Activated CD8-positive, alpha-beta T cell treated with anti-CD3 and anti-CD28 coated beads for 36 hours (primary cell): ENCODE measurements at regions of chr1 and their contacts with region 1.

Region 1: GRCh38 chr1:89739844-89740216 is 81.0 kb upstream of the LRRC8D start:
- DNase-seq: no peak
- ATAC-seq: no peak
- H3K4me3 Mint-ChIP-seq: peak overlapping the region; percentile 70
- H3K27ac Mint-ChIP-seq: peak overlapping the region; percentile 93
- H3K4me1 Mint-ChIP-seq: peaks cover 48% of the 10 kb centered on the region
- H3K27me3 Mint-ChIP-seq: no peaks in the 10 kb centered on the region
- CTCF ChIP-seq: no peak

Region 2: DNA sequence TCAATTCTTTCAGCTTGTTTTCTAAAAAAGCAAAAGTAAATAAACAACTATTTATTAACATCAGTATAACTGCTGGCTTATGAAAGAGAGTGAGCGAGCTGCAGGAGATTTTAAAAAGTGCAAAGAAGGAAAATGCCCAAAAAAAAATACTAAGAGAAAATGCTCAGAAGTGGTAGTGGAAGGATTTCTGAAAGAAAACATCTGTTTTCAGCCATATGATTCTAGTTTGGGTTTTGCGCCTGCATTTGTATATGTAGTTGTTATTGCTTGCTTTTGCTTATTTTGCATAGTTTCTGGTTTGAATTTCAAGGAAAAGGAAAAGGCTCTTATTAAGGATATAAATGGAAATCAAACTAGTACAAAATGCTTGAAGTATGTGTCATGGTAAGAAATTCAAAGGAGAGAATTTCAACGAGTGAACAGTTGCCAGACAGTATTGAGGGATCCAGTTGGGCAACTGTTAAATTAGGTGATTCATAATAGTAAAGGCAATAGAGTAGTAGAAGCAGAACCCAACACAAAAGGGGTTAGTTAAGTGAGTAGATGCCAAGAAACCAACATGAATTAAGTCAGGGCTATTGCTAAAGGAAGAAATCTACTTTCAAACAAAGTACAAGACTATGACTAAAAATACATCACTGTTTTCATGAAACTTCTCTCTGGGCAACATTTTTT is 468.4 kb before region 1 on chr1:
- CTCF ChIA-PET with region 1: no interaction called
- POLR2A ChIA-PET with region 1: no interaction called
- intact Hi-C with region 1: no loop called
- DNase-seq: no peak
- ATAC-seq: no peak
- H3K4me3 Mint-ChIP-seq: peak overlapping the region; percentile 100
- H3K27ac Mint-ChIP-seq: peak overlapping the region; percentile 100
- H3K4me1 Mint-ChIP-seq: peaks cover 58% of the 10 kb centered on the region
- H3K27me3 Mint-ChIP-seq: no peaks in the 10 kb centered on the region
- CTCF ChIP-seq: no peak

Region 3: GRCh38 chr1:89757532-89757931 is 17.7 kb after region 1 on chr1:
- CTCF ChIA-PET with region 1: interaction called, 18 read pairs
- POLR2A ChIA-PET with region 1: interaction called, 12 read pairs
- intact Hi-C with region 1: no loop called
- DNase-seq: peak; percentile 86
- ATAC-seq: peak; percentile 86
- H3K4me3 Mint-ChIP-seq: peak overlapping the region; percentile 73
- H3K27ac Mint-ChIP-seq: peak overlapping the region; percentile 93
- H3K4me1 Mint-ChIP-seq: peaks cover 89% of the 10 kb centered on the region
- H3K27me3 Mint-ChIP-seq: no peaks in the 10 kb centered on the region
- CTCF ChIP-seq: no peak